ENCODE measurements at regions of chr2 and their contacts with region 1.

Region 1: DNA sequence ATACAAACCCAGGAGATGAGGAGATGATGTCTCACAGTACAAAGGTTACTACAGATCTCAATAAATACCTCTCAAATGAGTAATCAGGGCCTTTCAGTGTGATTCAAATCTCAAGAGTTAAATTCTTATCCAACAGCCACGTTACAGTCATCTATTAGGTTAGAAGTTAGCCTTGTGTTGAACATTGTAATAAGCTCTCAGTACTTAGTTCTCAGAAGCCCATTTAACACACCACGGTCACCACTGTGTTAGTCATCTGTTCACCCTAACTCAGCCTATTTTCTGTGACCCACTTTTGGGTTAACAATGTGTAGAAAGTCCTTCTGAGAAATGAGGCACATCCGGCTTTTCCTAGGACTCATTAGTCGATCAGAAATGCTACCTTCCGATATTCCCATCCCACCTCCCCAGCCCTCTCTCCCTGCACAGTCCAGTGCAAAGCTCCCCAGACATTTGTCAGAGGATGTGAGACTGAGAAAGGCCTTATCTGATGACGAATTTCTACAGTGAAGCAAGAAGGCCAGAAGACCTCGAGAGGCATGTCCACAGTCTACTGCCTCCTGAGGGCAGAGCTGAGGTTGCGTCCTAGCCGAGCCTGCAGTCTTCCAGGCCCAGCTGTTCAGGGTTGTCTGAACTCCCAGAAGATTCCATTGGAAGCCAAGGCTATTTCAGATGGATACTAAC is 92.6 kb downstream of the ACTR2 start:
- DNase-seq: peak; percentile 64
- H3K4me3 Mint-ChIP-seq: peak overlapping the region; percentile 32
- H3K27ac Mint-ChIP-seq: peak overlapping the region; percentile 67
- H3K4me1 Mint-ChIP-seq: peaks cover 35% of the 10 kb centered on the region
- H3K27me3 Mint-ChIP-seq: no peaks in the 10 kb centered on the region
- CTCF ChIP-seq: peak; percentile 24

Region 2: DNA sequence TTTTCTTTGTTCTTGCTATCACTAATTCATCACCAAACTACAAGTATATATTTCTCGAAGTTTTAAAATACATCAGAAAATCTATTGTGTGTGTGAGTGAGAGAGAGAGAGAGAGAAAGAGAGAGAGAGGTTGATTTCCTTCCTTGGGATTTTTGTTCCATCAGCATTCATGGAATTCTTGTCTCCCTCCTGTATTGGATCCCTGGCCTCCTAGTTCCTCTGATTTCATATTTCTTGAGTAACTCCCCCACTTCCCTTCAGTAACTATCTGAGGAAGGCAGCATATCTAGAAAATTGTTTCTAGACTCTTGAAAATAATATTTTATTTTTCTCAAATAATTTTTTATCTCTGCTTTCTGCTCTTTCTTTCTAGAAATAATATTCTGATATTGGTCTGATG is 105.8 kb before region 1 on chr2:
- CTCF ChIA-PET with region 1: no interaction called
- POLR2A ChIA-PET with region 1: no interaction called
- intact Hi-C with region 1: no loop called
- DNase-seq: no peak
- H3K4me3 Mint-ChIP-seq: no peak overlapping the region
- H3K27ac Mint-ChIP-seq: no peak overlapping the region
- H3K4me1 Mint-ChIP-seq: no peaks in the 10 kb centered on the region
- H3K27me3 Mint-ChIP-seq: no peaks in the 10 kb centered on the region
- CTCF ChIP-seq: no peak

Region 3: GRCh38 chr2:65351234-65351947 is 31.2 kb after region 1 on chr2:
- CTCF ChIA-PET with region 1: interaction called, 5 read pairs
- POLR2A ChIA-PET with region 1: interaction called, 10 read pairs
- intact Hi-C with region 1: no loop called
- DNase-seq: no peak
- H3K4me3 Mint-ChIP-seq: no peak overlapping the region
- H3K27ac Mint-ChIP-seq: no peak overlapping the region
- H3K4me1 Mint-ChIP-seq: peaks cover 43% of the 10 kb centered on the region
- H3K27me3 Mint-ChIP-seq: no peaks in the 10 kb centered on the region
- CTCF ChIP-seq: no peak

Region 4: GRCh38 chr2:65382776-65383357 is 62.7 kb after region 1 on chr2:
- CTCF ChIA-PET with region 1: no interaction called
- POLR2A ChIA-PET with region 1: interaction called, 13 read pairs
- intact Hi-C with region 1: loop called (anchors 2 kb)
- DNase-seq: peak; percentile 94
- H3K4me3 Mint-ChIP-seq: peak overlapping the region; percentile 59
- H3K27ac Mint-ChIP-seq: peak overlapping the region; percentile 81
- H3K4me1 Mint-ChIP-seq: peaks cover 60% of the 10 kb centered on the region
- H3K27me3 Mint-ChIP-seq: no peaks in the 10 kb centered on the region
- CTCF ChIP-seq: no peak

Region 5: DNA sequence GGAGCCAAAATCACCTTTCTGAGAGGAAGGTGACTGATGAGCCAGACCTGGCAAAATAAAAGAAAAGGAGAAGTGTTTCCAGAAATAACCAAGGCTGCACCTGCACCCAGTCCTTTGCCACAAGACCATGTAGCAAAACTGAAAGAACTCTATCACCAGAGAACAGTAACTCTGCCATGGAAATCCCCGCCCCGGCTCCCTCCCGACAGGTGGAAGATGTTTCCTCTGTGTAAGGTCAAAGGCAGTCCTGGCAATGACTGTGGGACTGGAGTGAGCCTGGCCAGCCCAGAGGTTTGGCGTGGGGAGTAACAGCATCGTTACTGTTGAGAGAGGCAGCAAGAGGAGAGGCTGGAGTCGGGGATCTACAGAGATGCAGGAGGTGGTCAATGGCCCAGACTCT is 70.0 kb after region 1 on chr2:
- CTCF ChIA-PET with region 1: interaction called, 3 read pairs
- POLR2A ChIA-PET with region 1: interaction called, 10 read pairs
- intact Hi-C with region 1: no loop called
- DNase-seq: no peak
- H3K4me3 Mint-ChIP-seq: no peak overlapping the region
- H3K27ac Mint-ChIP-seq: peak overlapping the region; percentile 70
- H3K4me1 Mint-ChIP-seq: peaks cover 65% of the 10 kb centered on the region
- H3K27me3 Mint-ChIP-seq: no peaks in the 10 kb centered on the region
- CTCF ChIP-seq: no peak

Measured in MCF 10A (cell line).